Heart left ventricle (tissue), 16 donors: ENCODE measurements at regions of chr3 and their contacts with region 1.

Region 1: DNA sequence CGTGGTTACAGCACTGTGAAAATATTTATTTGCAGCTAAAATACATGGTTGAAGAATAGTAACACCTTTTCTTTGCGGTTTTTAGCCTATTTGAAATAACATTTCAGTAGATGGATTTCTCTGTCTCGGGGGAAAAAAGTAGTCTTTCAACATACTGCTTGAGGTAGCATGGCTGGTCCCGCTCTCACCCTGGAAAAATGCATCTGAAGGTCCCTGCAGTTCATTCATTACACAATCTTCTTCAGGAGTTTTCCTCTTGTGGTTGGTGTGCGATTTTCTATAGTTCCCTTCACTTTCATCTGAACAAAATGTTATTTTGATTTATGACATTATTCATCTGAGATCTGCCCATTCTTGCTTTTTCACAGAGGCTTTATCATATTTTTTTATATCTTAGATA is 75.9 kb downstream of the STRIT1 start:
- DNase-seq: no peak
- ATAC-seq: peak in 1 of 4 donors; percentile 52
- H3K4me3 ChIP-seq: no peak overlapping the region
- H3K27ac ChIP-seq: no peak overlapping the region
- H3K4me1 ChIP-seq: peaks cover 0 to 7% (median 0%) of the 10 kb centered on the region in 12 donors
- H3K27me3 ChIP-seq: no peaks in the 10 kb centered on the region
- CTCF ChIP-seq: no peak
- POLR2A ChIP-seq: no peak

Region 2: DNA sequence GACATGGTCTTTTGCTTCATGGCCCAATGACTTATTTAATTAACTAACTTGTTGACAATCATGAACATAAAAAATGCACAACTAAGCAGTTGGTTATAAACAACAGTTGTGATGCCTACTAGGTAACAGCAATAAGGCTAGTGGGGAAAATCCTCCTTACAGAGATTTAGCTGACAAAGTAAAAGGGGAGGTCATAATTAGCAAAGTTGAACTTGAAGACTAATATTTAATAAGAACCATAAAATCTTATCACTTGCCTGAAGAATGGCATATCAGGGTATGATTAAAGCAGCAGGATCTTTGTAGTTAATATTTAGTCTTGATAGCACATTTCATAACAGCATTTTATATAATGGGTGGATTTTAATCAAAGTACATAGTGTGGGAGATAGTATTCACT is 53.3 kb before region 1 on chr3:
- intact Hi-C with region 1: loop called in 1 of 10 experiments (anchors 5 kb)
- DNase-seq: no peak
- ATAC-seq: no peak
- H3K4me3 ChIP-seq: no peak overlapping the region
- H3K27ac ChIP-seq: no peak overlapping the region
- H3K4me1 ChIP-seq: no peaks in the 10 kb centered on the region
- H3K27me3 ChIP-seq: no peaks in the 10 kb centered on the region
- CTCF ChIP-seq: no peak
- POLR2A ChIP-seq: no peak

Region 3: DNA sequence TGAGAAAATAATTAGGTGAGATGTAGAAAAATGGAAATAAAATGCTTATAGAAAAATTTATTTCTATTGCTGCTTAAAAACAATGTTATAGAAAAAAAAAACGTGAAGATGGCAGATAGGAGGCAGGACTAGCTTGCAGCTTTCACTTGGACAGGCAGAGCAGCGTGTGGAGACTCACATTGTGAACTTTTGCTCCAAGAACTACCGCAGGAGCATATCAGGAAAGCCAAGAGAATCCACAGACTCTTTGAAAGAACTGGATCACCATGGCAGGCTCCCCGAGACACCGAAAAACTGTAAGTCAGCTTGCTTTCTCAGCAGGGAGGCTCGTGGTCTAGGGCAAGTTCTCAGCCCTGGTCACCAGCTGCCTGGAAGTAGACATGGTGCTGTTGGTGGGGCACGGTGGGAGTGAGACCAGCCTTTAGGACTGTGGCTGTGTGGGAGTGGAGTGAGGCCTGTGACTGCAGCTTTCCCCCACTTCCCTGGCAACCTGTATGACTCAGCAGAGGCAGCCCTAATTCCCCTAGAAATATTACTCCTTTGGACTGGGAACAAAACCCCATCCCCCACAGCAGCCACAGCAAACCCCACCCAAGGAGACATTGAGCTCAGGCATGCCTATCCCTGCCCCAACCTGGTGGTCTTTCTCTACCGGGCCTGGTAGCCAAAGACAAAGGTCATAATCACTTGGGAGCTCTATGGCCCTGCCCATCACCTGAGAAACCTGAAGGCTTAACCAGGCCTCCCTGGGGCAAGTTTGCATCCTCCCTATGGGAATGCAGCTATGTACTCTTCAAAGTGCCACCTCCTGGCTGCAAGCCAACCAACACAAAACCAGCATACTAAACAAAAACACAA is 53.1 kb after region 1 on chr3:
- intact Hi-C with region 1: no loop called
- DNase-seq: no peak
- ATAC-seq: no peak
- H3K4me3 ChIP-seq: no peak overlapping the region
- H3K27ac ChIP-seq: no peak overlapping the region
- H3K4me1 ChIP-seq: no peaks in the 10 kb centered on the region
- H3K27me3 ChIP-seq: no peaks in the 10 kb centered on the region
- CTCF ChIP-seq: no peak
- POLR2A ChIP-seq: no peak